ENCODE measurements at regions of chr9 and their contacts with region 1.

Region 1: GRCh38 chr9:93111371-93112115 is 15.5 kb downstream of the CARD19 start:
- DNase-seq: no peak
- ATAC-seq: no peak
- H3K4me3 ChIP-seq: no peak overlapping the region
- H3K27ac ChIP-seq: peak overlapping the region in 1 of 2 experiments; percentile 81; a peak in 3 of 6 replicates
- H3K4me1 ChIP-seq: peaks cover 54% of the 10 kb centered on the region
- CTCF ChIP-seq: no peak
- EP300 ChIP-seq: no peak
- POLR2A ChIP-seq: no peak
- RAD21 ChIP-seq: no peak

Region 2: DNA sequence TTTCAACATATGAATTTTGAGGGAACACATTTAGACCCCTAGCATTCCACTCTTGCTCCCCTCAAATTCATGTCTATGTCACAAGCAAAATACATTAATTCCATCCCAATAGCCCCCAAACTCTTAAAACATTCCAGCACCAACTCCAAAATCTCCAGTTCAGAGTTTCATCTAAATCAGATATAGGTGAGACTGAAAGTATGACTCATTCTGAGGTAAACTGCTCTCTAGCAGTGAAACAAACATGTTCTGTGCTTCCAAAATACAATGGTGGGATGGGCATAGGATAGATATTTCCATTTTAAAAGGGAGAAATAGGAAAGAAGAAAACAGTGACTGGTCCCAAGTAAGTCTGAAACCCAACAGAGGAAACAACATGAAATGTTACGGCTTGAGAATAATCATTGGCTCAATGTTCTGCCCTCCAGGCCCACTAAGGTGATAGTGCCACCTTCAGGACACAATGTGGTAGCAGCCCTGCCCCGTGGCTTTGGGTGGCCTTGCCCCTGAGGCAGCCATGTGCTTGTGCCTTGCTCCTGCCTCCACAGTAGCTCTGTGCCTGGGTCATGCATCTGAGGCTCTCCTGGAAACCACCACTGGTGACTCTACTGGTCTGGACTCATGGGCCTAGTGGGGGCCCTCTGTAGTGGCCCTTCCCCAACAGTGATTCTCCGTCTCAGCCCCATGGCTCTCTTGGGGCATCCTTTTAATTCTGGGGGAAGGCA is 405.2 kb before region 1 on chr9:
- CTCF ChIA-PET with region 1: no interaction called
- POLR2A ChIA-PET with region 1: no interaction called
- DNase-seq: peak in 1 of 2 experiments; percentile 35
- ATAC-seq: peak; percentile 70 to 90
- H3K4me3 ChIP-seq: no peak overlapping the region
- H3K27ac ChIP-seq: no peak overlapping the region
- H3K4me1 ChIP-seq: no peaks in the 10 kb centered on the region
- CTCF ChIP-seq: no peak
- EP300 ChIP-seq: no peak
- POLR2A ChIP-seq: no peak
- RAD21 ChIP-seq: peak in 1 of 2 experiments; percentile 32; a peak in 1 of 5 replicates

Region 3: DNA sequence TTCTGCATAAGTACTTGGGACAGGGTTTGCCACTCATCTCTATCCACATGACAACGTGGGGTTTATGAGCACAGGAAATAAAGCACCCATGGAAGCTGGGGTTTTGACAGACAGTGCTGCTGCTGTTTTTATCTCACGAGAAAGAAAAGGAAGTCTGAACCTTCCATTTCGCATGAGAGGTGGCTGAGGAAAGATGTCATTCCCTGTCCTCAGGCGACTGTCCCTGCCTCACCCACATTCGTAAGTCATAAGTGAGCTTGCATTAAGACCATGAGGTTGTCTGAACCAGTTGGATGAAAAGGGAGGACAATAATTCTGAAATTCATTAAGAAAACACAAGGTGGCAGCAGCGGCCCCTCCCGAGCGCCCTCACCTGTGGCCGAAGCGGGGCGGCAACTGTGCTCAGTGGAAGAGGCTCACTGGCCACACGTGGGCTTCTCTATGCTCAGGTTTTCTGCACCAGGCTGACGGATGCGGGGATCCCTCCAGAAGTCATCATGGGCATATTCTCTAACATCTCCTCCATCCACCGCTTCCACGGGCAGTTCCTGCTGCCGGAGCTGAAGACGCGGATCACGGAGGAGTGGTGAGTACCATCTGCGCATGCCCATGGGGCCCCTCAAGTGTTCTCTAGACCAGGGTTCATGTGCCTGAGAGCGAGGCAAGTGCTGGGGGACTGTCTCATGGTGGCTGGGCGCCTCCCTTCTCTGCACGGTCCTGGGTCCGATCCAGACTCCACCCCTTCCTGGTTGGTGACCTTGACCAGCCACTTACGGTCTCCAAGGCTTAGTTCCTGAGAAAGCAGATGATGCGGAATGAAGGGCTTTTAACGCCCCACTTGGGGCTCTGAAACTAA is 107.8 kb before region 1 on chr9:
- CTCF ChIA-PET with region 1: interaction called, 68 read pairs
- POLR2A ChIA-PET with region 1: no interaction called
- DNase-seq: peak; percentile 72 to 73
- ATAC-seq: peak; percentile 94 to 97
- H3K4me3 ChIP-seq: peak overlapping the region; percentile 52
- H3K27ac ChIP-seq: peak overlapping the region; percentile 71 to 83
- H3K4me1 ChIP-seq: 0 out of 3 replicates have a peak, but pooled peaks cover 6% of the 10 kb centered on the region
- CTCF ChIP-seq: peak; percentile 90
- EP300 ChIP-seq: no peak
- POLR2A ChIP-seq: no peak
- RAD21 ChIP-seq: peak; percentile 83 to 86

Region 4: DNA sequence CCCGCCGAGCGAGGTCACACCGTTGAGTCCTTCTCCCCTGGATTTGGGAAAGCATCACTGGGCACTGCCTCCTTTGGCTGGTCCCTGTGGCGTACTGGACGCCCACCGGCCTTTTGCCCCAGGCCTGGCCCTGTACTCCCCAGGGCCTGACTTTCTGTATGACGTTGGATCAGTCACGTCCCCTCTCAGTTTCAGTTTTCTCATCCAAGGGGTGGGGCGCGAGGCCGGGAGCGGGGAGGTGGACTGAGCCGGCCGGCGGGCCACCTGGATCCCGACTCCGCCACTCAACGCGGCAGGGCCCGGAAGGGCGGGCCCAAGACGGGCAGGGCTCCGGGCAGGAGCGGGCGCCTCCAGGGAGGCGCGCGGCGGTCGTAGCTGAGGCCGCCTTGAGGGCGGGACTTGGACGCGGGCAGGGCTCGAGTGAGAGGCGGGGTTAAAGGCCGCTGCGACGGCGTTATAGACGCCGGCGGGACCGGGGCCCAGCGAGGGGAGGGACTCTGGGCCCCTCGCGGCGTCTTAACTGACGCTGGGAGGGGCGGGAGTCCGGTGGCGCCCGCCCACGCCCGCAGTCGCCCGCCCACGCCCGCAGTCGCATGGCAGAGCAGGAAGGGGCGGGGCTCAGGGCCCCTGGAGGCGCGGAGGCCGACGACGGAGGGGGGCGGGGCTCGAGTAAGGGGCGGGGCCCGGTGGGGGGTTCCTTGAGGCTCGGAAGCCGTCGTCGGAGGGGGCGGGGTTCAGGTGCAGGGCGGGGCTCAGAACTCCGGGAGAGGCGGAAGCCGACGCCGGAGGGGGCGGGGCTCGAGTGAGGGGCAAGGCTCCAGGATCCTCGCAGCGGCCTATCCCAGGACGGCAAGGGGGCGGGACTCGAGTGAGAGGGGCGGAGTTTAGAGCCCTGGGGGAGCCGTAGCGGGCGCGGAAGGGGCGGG is 16.1 kb before region 1 on chr9:
- CTCF ChIA-PET with region 1: interaction called, 47 read pairs
- POLR2A ChIA-PET with region 1: interaction called, 5 read pairs
- DNase-seq: peak; percentile 91 to 98
- ATAC-seq: peak; percentile 55 to 89
- H3K4me3 ChIP-seq: peak overlapping the region; percentile 57
- H3K27ac ChIP-seq: peak overlapping the region; percentile 98 to 99
- H3K4me1 ChIP-seq: peaks cover 64% of the 10 kb centered on the region
- CTCF ChIP-seq: no peak
- EP300 ChIP-seq: no peak
- POLR2A ChIP-seq: peak; percentile 83
- RAD21 ChIP-seq: no peak

Region 5: GRCh38 chr9:93134015-93134739 is 22.6 kb after region 1 on chr9 and contains the start of gene NINJ1:
- CTCF ChIA-PET with region 1: interaction called, 14 read pairs
- POLR2A ChIA-PET with region 1: interaction called, 3 read pairs
- DNase-seq: peak; percentile 56 to 90
- ATAC-seq: peak; percentile 74 to 85
- H3K4me3 ChIP-seq: peak within 1 kb of the TSS; percentile 89
- H3K27ac ChIP-seq: peak within 1 kb of the TSS; percentile 91 to 96
- H3K4me1 ChIP-seq: peaks cover 46% of the 10 kb centered on the region
- CTCF ChIP-seq: no peak
- EP300 ChIP-seq: no peak
- POLR2A ChIP-seq: peak; percentile 73
- RAD21 ChIP-seq: no peak
- polyA plus RNA-seq, gene NINJ1: 27.0 and 37.9 TPM in 2 replicates

Region 6: DNA sequence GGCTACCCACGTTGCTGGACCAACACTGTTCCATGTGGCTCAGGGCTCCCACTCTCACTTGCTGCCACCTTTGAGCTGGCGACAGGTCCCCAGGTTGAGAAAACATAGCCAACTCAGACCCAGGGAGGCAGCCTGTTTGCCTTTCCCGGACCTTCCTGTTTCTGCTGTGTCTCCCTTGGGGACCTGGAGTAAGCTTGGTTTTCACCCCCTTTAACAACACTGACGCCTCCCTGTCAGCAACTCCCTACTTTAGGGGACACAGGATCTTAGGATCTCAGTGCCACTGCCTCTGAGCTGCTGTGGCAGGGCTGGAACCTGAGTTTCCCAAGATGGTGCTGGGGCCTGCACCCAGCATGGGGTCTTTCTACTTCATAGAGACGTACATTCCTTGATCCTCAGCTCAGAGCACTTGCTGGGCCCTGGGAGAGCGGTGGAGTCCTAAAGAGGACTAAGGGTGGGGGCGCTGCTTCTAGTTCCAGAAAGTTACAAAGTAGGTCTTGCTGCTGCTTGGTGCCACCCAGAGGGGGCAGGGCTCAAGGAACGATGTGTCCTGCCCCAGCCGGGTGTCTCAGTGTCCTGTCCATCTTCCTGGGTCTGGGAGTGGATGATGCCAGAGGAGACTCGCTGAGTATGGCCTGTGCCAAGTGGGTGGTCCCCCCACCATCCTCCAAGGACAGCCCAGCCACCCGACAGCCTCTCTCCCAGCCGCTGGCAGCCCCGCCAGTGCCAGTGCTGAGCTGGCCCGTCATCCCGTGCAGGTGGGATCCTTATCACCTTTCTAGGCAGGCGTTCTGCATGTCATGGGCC is 77.6 kb after region 1 on chr9:
- CTCF ChIA-PET with region 1: interaction called, 12 read pairs
- POLR2A ChIA-PET with region 1: no interaction called
- DNase-seq: no peak
- ATAC-seq: no peak
- H3K4me3 ChIP-seq: no peak overlapping the region
- H3K27ac ChIP-seq: no peak overlapping the region
- H3K4me1 ChIP-seq: 0 out of 3 replicates have a peak, but pooled peaks cover 3% of the 10 kb centered on the region
- CTCF ChIP-seq: no peak
- EP300 ChIP-seq: no peak
- POLR2A ChIP-seq: no peak
- RAD21 ChIP-seq: no peak